ENCODE measurements at regions of chr1 and their contacts with region 1.

Region 1: GRCh38 chr1:113452921-113453770 is 62.8 kb downstream of the MAGI3 start:
- DNase-seq: peak; percentile 14
- CTCF ChIP-seq: peak; percentile 42

Region 2: DNA sequence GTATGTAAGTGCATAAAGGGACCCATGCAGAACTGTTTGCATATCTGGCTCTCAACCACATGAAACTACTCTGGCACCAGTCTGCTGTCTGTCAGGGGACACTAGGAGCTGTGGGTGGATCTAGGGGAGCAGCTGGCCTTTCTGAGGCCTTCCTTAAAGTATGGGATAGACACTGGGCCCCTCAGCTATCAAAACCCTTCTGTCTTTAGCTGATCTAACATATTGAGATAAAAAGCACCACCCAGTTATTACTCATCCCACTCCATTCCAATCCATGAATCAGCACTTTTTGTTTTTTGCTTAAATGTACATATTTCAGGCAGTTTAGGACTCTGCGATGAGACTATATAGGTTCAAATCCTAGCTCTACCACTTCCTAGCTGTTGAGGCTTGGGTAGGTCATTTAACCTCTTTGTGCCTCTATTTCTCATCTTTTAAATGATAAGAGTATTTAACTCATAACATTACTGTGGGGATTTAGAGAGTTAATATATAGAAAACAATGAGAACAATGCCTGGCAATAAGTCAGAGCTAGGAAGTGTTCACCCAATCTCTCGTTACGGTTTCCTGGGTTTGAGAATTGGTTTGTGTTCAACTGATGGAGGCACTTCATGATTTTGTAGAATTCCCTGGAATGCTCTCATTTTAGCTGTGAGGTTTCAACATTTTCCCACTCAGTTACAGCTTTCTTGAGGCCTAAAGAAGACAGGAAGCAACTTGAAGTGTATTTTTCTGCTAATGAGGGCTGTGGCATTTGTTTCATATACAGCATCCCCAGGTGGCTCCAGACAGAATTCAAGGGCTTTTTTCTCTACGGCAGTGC is 311.3 kb before region 1 on chr1:
- in situ Hi-C with region 1: no loop called
- DNase-seq: no peak
- CTCF ChIP-seq: no peak

Region 3: GRCh38 chr1:113153116-113153803 is 299.9 kb before region 1 on chr1:
- in situ Hi-C with region 1: loop called (anchors 25 kb)
- DNase-seq: no peak
- CTCF ChIP-seq: no peak

Region 4: DNA sequence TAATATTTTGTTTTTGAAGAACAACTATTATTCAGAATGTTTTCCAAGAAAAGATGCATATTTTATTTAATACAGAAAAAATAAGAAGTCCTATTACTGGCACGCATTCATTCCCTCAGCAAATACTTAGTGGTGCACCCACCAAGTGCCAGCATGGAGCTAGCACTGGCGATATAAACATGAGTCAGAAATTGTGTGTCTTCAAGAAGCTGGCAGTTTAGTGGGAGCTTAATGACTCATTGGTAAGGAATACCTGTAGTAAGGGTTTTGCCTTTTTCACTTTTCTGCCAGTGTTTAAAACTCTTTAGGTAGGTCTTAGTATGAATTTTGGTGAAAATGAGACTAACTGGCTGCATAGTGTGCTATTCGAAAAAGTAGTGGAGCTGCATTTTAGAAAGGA is 56.6 kb before region 1 on chr1:
- in situ Hi-C with region 1: no loop called
- DNase-seq: no peak
- CTCF ChIP-seq: no peak

Region 5: GRCh38 chr1:113576271-113576670 is 123.1 kb after region 1 on chr1:
- in situ Hi-C with region 1: no loop called
- DNase-seq: no peak
- CTCF ChIP-seq: no peak